Prostate gland (tissue), 2 donors: ENCODE measurements at regions of chr10 and their contacts with region 1.

Region 1: GRCh38 chr10:110803830-110804338 is 67.8 kb upstream of the PDCD4 start:
- DNase-seq: peak; percentile 46
- H3K4me3 ChIP-seq: no peak overlapping the region
- H3K27ac ChIP-seq: peak overlapping the region; percentile 0 to 27
- H3K4me1 ChIP-seq: no peaks in the 10 kb centered on the region
- H3K27me3 ChIP-seq: no peaks in the 10 kb centered on the region
- CTCF ChIP-seq: peak; percentile 20 to 70 (median 56)
- POLR2A ChIP-seq: no peak

Region 2: GRCh38 chr10:110746254-110746826 is 57.5 kb before region 1 on chr10:
- intact Hi-C with region 1: loop called (anchors 10 kb)
- DNase-seq: peak; percentile 73
- H3K4me3 ChIP-seq: no peak overlapping the region
- H3K27ac ChIP-seq: no peak overlapping the region
- H3K4me1 ChIP-seq: no peaks in the 10 kb centered on the region
- H3K27me3 ChIP-seq: no peaks in the 10 kb centered on the region
- CTCF ChIP-seq: peak; percentile 75 to 89 (median 83)
- POLR2A ChIP-seq: no peak

Region 3: GRCh38 chr10:110871298-110872084 is 67.6 kb after region 1 on chr10 and contains the start of gene PDCD4:
- intact Hi-C with region 1: loop called (anchors 5 kb)
- DNase-seq: peak; percentile 99
- H3K4me3 ChIP-seq: peak within 1 kb of the TSS; percentile 93 to 99
- H3K27ac ChIP-seq: peak within 1 kb of the TSS; percentile 99 to 100
- H3K4me1 ChIP-seq: peaks cover 13% of the 10 kb centered on the region
- H3K27me3 ChIP-seq: no peaks in the 10 kb centered on the region
- CTCF ChIP-seq: no peak
- POLR2A ChIP-seq: peak; percentile 96
- total RNA-seq, gene PDCD4: 104 to 120 TPM

Region 4: GRCh38 chr10:110893559-110894179 is 89.8 kb after region 1 on chr10:
- intact Hi-C with region 1: loop called (anchors 2 kb)
- DNase-seq: no peak
- H3K4me3 ChIP-seq: no peak overlapping the region
- H3K27ac ChIP-seq: no peak overlapping the region
- H3K4me1 ChIP-seq: peaks cover 7% of the 10 kb centered on the region
- H3K27me3 ChIP-seq: no peaks in the 10 kb centered on the region
- CTCF ChIP-seq: peak; percentile 47 to 76 (median 72)
- POLR2A ChIP-seq: no peak